GM10248 (cell line): ENCODE measurements at regions of chrX and their contacts with region 1.

Region 1: DNA sequence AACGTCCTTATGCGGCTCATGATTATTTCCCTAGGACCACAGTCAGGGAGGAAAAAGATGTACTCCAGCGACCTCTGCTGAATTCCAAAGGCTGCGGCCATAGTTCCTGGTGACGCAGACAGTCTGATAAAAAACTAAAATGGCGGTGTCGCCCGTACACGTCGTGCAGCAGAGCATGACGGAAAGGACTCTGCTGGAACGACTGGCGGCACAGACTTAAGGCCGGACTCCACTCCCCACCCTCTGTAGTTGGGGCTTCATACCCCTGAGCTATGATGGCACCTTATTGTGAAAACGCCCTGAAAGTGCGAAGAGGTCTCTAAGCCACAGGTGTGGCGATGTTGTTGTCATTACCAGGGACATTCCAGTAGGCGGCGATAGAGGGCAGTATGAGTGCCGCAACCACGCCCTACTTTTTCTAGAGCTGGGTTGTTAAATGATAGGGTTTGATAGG is 90.0 kb upstream of the EDA2R start:
- DNase-seq: peak; percentile 21
- CTCF ChIP-seq: peak; percentile 33

Region 2: GRCh38 chrX:66200855-66201795 is 527.7 kb before region 1 on chrX:
- CTCF ChIA-PET with region 1: interaction called, 14 read pairs
- POLR2A ChIA-PET with region 1: no interaction called
- DNase-seq: peak; percentile 13
- CTCF ChIP-seq: peak; percentile 25

Region 3: DNA sequence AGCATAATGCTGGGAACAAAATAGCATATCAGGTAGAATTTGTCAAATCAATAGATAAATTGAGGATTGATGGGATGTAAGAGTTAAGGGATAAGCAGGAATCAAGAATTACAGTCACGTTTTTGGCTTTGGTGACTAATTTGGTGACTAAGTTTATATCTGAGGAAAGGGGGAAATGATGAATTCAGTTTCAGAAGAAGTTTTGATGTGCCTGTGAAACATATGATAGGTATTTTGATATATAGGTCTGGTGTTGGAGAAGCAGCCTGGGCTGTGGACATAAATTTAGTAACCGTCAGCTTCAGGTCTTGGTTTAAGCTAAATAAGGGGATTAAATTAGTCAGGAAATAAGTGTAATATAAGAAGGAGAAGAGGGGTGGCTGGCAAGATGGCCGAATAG is 10.9 kb before region 1 on chrX:
- CTCF ChIA-PET with region 1: interaction called, 10 read pairs
- POLR2A ChIA-PET with region 1: no interaction called
- DNase-seq: no peak
- CTCF ChIP-seq: no peak